ENCODE measurements at regions of chr1 and their contacts with region 1.

Region 1: GRCh38 chr1:6464514-6464836 is 1.5 kb downstream of the TNFRSF25 start:
- DNase-seq: no peak
- H3K4me3 Mint-ChIP-seq: peak overlapping the region; percentile 99
- H3K27ac Mint-ChIP-seq: peak overlapping the region; percentile 91
- H3K4me1 Mint-ChIP-seq: peaks cover 41% of the 10 kb centered on the region
- H3K27me3 Mint-ChIP-seq: no peaks in the 10 kb centered on the region

Region 2: GRCh38 chr1:6026095-6026809 is 438.2 kb before region 1 on chr1:
- intact Hi-C with region 1: loop called (anchors 5 kb)
- DNase-seq: peak; percentile 90
- H3K4me3 Mint-ChIP-seq: peak overlapping the region; percentile 97
- H3K27ac Mint-ChIP-seq: peak overlapping the region; percentile 94
- H3K4me1 Mint-ChIP-seq: peaks cover 50% of the 10 kb centered on the region
- H3K27me3 Mint-ChIP-seq: no peaks in the 10 kb centered on the region

Region 3: DNA sequence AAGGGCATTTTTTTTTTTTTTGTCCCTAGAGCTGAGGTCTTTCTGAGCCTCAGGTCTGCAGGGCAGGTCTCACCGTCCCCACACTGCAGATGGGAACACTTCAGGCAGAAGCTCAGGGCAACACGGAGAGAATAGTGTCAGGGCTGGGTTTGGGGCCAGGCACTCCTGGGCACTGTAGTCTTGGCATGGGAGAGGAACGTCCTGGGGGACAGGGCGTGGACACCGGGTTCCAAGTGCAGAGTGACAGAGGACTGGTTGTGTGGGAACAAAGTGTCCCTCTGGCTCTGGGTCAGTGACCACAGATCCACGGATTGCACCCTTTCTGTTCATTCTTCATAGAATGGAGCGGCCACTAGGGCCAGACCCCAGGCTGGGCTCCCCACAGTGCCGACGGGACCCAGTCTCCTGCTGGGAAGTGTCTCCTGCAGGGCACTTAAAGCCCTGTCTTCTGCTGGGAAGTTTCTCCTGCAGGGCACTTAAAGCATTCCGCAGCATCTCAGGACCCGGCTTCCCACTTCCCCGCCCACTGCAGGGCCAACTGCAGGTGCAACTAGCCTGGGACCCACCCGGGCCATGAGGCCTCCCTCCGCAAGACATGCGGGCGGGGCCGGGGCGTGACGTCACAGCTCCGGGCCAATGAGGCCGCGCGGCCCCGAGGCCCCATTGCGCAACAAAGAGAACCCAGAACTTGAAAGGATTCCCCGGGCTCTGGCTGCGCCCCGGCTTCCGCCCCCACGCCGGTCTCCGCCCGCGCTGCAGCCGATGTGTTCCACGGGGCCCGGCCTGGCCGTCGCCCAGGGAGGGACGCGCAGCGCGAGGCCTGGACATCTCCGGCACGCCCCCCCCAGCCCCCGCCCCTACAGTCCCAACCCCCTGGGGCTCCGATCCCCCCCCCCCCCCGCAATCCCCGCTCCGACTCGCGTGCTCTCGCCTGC is 204.7 kb before region 1 on chr1:
- intact Hi-C with region 1: loop called (anchors 5 kb)
- DNase-seq: peak; percentile 80
- H3K4me3 Mint-ChIP-seq: peak overlapping the region; percentile 46
- H3K27ac Mint-ChIP-seq: no peak overlapping the region
- H3K4me1 Mint-ChIP-seq: no peaks in the 10 kb centered on the region
- H3K27me3 Mint-ChIP-seq: peaks cover 12% of the 10 kb centered on the region

Region 4: DNA sequence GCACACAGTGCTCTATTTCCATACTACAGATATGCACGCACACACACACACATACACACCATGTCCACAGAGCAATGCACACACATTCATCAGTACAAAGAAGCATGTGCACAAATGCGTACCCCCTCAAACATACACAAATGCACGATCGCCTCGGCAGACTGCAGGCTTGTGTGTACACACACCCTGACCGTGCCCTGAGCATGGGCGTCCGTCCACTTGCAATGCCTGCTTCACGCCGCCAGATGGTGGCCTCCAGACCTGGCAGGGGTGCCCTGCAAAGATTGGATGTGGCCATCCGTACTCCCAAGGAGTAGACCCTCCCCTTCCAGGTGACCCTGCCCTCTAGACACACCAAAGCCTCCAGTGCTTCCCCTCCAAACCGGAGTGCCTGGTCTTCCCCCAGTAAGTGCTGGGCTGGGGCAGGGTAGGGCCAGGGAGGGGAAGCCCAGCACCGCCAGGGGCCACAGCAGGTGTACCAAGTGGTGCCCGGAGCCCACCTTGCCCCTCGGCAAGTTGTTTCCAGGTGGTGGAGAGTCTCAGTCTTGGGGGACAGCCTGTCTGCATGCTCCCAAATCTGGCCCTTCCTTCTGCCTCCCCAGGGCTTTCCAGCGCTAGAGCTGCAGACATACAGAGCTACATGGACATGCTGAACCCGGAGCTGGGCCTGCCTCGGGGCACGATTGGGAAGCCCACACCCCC is 19.3 kb before region 1 on chr1:
- intact Hi-C with region 1: loop called (anchors 2 kb)
- DNase-seq: no peak
- H3K4me3 Mint-ChIP-seq: no peak overlapping the region
- H3K27ac Mint-ChIP-seq: no peak overlapping the region
- H3K4me1 Mint-ChIP-seq: peaks cover 15% of the 10 kb centered on the region
- H3K27me3 Mint-ChIP-seq: peaks cover 50% of the 10 kb centered on the region

Region 5: GRCh38 chr1:6475381-6476133 is 11.1 kb after region 1 on chr1:
- intact Hi-C with region 1: loop called (anchors 1 kb)
- DNase-seq: peak; percentile 70
- H3K4me3 Mint-ChIP-seq: no peak overlapping the region
- H3K27ac Mint-ChIP-seq: no peak overlapping the region
- H3K4me1 Mint-ChIP-seq: no peaks in the 10 kb centered on the region
- H3K27me3 Mint-ChIP-seq: no peaks in the 10 kb centered on the region

Region 6: DNA sequence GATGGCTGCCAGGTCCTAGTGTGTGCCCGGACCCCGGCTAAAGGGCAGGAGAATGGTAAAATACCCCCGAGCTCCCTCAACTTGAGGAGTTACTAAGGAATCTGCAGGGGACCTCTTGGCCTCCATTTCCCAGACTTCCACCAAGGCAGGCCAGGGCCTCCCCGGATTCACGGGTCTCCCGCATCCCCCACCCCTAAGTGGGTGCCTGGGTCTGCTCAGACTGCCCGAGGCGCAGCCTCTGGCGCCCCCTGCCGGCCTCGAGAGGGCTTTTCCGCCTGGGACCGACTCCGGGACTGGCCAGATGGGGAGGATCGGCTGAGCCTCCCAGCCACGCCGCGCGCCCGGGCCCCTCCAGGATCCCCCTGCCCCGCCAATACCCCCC is 25.3 kb after region 1 on chr1:
- intact Hi-C with region 1: loop called (anchors 2 kb)
- DNase-seq: peak; percentile 79
- H3K4me3 Mint-ChIP-seq: peak overlapping the region; percentile 85
- H3K27ac Mint-ChIP-seq: peak overlapping the region; percentile 48
- H3K4me1 Mint-ChIP-seq: peaks cover 16% of the 10 kb centered on the region
- H3K27me3 Mint-ChIP-seq: peaks cover 25% of the 10 kb centered on the region